ENCODE measurements at regions of chr1 and their contacts with region 1.

Region 1: DNA sequence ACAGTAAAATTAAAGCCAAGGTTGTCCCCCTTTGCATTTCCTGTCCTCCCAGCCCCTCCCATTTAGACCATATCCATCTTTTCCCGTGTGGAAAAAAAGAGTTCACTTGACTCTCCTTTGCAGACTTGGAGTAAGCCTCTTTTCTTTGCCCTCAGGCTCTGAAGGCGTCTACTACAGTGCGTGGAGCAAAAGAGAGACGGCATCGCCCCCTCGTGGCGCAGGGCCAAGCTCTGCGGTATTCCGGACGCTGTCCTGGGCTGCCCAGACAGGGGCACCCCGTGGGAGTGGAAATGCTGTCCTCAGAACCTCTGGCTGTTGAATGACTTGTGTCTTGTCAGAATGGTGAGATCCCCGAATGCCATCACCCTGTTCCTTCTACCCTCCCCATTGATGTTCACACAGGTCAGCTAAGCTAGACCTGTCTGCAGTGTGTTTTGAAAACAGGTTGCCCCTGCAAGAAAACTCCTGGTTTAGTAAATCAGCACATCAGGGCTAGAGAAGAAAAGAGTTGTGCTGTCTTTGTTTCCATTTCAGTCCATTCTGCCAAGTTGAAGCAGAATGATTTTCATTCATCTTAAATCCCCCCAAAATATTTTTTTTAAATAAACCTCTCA is 12.3 kb upstream of the GJA8 start:
- DNase-seq: peak; percentile 42
- H3K4me3 Mint-ChIP-seq: no peak overlapping the region
- H3K27ac Mint-ChIP-seq: no peak overlapping the region
- H3K4me1 Mint-ChIP-seq: no peaks in the 10 kb centered on the region
- H3K27me3 Mint-ChIP-seq: peaks cover 14% of the 10 kb centered on the region

Region 2: GRCh38 chr1:147273409-147274336 is 616.6 kb before region 1 on chr1:
- intact Hi-C with region 1: loop called (anchors 1 kb)
- DNase-seq: peak; percentile 11
- H3K4me3 Mint-ChIP-seq: no peak overlapping the region
- H3K27ac Mint-ChIP-seq: no peak overlapping the region
- H3K4me1 Mint-ChIP-seq: no peaks in the 10 kb centered on the region
- H3K27me3 Mint-ChIP-seq: no peaks in the 10 kb centered on the region

Region 3: GRCh38 chr1:147700042-147701006 is 190.0 kb before region 1 on chr1:
- intact Hi-C with region 1: loop called (anchors 2 kb)
- DNase-seq: peak; percentile 45
- H3K4me3 Mint-ChIP-seq: no peak overlapping the region
- H3K27ac Mint-ChIP-seq: no peak overlapping the region
- H3K4me1 Mint-ChIP-seq: peaks cover 9% of the 10 kb centered on the region
- H3K27me3 Mint-ChIP-seq: peaks cover 30% of the 10 kb centered on the region

Region 4: GRCh38 chr1:147723691-147724323 is 166.5 kb before region 1 on chr1:
- intact Hi-C with region 1: loop called (anchors 1 kb)
- DNase-seq: no peak
- H3K4me3 Mint-ChIP-seq: no peak overlapping the region
- H3K27ac Mint-ChIP-seq: no peak overlapping the region
- H3K4me1 Mint-ChIP-seq: no peaks in the 10 kb centered on the region
- H3K27me3 Mint-ChIP-seq: peaks cover 13% of the 10 kb centered on the region